ENCODE measurements at regions of chr5 and their contacts with region 1.

Region 1: DNA sequence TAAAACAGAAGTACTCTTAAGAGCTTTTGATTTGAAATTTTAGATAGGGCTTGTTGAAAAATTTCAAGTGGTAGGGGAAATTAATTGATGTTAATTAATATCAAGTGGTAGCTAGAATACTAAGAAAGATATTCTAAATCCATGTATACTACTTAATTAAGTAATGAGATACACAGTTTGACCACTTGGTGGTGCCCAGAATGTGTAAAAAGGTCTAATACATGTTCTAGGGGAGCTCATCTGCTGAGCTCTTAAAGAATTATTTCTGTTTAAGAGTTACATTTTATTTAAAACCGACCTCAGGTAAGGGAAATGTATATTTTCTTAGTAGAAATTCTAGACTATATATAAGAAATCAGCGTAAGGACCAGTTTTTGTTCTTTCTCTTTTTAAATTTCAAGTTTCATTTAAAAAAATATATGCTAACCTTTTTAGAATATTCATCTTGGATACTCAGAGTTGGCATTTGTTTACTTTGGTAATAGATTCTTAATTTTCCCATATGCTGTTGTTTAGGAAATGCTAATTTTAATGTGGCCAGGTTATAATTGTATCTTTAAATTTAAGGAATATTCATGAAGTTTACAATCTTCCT is 61.5 kb downstream of the LNPEP start:
- DNase-seq: peak; percentile 49
- ATAC-seq: peak; percentile 77
- H3K4me3 Mint-ChIP-seq: no peak overlapping the region
- H3K27ac Mint-ChIP-seq: no peak overlapping the region
- H3K4me1 Mint-ChIP-seq: peaks cover 31% of the 10 kb centered on the region
- H3K27me3 Mint-ChIP-seq: no peaks in the 10 kb centered on the region
- CTCF ChIP-seq: peak; percentile 60

Region 2: GRCh38 chr5:96986450-96986849 is 10.9 kb before region 1 on chr5:
- CTCF ChIA-PET with region 1: interaction called, 18 read pairs
- POLR2A ChIA-PET with region 1: no interaction called
- intact Hi-C with region 1: no loop called
- DNase-seq: no peak
- ATAC-seq: peak; percentile 57
- H3K4me3 Mint-ChIP-seq: no peak overlapping the region
- H3K27ac Mint-ChIP-seq: peak overlapping the region; percentile 36
- H3K4me1 Mint-ChIP-seq: peaks cover 58% of the 10 kb centered on the region
- H3K27me3 Mint-ChIP-seq: no peaks in the 10 kb centered on the region
- CTCF ChIP-seq: no peak

Region 3: GRCh38 chr5:97009212-97009898 is 12.0 kb after region 1 on chr5:
- CTCF ChIA-PET with region 1: interaction called, 15 read pairs
- POLR2A ChIA-PET with region 1: interaction called, 3 read pairs
- intact Hi-C with region 1: no loop called
- DNase-seq: no peak
- ATAC-seq: peak; percentile 71
- H3K4me3 Mint-ChIP-seq: no peak overlapping the region
- H3K27ac Mint-ChIP-seq: peak overlapping the region; percentile 77
- H3K4me1 Mint-ChIP-seq: peaks cover 30% of the 10 kb centered on the region
- H3K27me3 Mint-ChIP-seq: no peaks in the 10 kb centered on the region
- CTCF ChIP-seq: no peak

Region 4: DNA sequence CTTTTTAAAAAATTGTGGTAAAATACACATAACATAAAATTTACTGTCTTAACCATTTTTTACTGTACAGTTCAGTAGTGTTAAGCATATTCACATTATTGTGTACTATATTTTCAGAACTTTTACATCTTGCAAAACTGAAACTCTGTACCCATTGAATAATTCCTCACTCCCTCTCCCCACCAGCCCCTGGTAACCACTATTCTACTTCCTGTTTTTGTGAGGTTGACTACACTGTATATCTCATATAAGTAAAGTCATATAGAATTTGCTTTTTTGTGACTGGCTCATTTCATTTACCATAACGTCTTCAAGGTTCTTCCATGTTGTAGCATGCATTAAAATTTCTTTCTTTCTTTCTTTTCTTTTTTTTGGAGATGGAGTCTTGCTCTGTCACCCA is 25.5 kb after region 1 on chr5:
- CTCF ChIA-PET with region 1: no interaction called
- POLR2A ChIA-PET with region 1: no interaction called
- intact Hi-C with region 1: no loop called
- DNase-seq: peak; percentile 13
- ATAC-seq: peak; percentile 68
- H3K4me3 Mint-ChIP-seq: no peak overlapping the region
- H3K27ac Mint-ChIP-seq: peak overlapping the region; percentile 46
- H3K4me1 Mint-ChIP-seq: peaks cover 20% of the 10 kb centered on the region
- H3K27me3 Mint-ChIP-seq: no peaks in the 10 kb centered on the region
- CTCF ChIP-seq: no peak

Region 5: GRCh38 chr5:97142521-97143254 is 145.3 kb after region 1 on chr5 and contains the start of gene LIX1:
- CTCF ChIA-PET with region 1: interaction called, 24 read pairs
- POLR2A ChIA-PET with region 1: no interaction called
- intact Hi-C with region 1: loop called (anchors 2 kb)
- DNase-seq: peak; percentile 57
- ATAC-seq: peak; percentile 86
- H3K4me3 Mint-ChIP-seq: no peak within 1 kb of the TSS
- H3K27ac Mint-ChIP-seq: no peak within 1 kb of the TSS
- H3K4me1 Mint-ChIP-seq: no peaks in the 10 kb centered on the region
- H3K27me3 Mint-ChIP-seq: peaks cover 8% of the 10 kb centered on the region
- CTCF ChIP-seq: peak; percentile 63
- total RNA-seq, gene LIX1: not detected

Measured in activated CD8-positive, alpha-beta T cell treated with anti-CD3 and anti-CD28 coated beads for 36 hours (primary cell).